ENCODE measurements at regions of chr1 and their contacts with region 1.

Region 1: DNA sequence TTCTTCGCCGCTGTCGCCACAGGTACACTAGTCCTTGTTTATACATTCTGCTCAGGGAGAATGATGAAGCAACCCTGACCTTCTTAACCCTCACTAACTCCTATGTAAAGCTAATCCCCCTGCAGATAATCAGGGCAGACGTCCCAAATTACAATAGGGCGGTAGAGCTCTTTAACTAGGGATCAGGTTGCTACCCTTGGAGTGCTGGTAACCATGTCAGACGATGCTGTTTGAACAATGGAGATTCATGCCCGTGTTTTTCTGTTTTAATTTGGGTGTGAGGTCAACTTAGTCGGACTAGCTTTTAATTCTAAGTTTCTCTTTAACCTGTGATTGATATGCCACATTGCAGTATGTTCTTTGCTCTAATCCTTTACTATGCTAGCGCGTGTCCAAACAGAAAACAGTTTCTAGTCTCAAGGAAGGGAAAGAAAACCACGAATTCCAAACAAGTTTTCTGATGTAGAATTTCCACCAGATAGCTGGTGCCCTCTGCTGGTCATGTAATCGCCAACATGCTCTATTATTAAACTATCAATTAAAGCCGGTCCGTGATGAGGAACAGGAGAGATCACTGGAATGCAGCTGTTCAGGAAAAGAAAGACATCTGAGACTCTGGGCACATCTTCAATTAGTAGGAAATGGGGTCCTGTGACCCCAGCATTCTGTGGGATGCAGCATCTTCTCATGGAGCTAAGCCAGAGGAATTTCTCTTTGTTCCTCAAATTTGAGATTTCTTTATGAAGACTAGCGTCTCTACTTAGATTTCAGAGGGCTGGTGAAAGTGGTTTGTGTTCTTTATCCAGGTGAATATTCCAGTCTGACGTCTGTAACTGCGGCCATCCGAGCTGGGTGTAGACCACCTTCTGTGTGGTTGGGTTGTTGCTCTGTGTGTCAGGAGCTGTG is 18.3 kb upstream of the VAMP3 start:
- DNase-seq: peak; percentile 84
- H3K4me3 ChIP-seq: no peak overlapping the region
- H3K27ac ChIP-seq: no peak overlapping the region
- H3K4me1 ChIP-seq: no peaks in the 10 kb centered on the region
- H3K27me3 ChIP-seq: no peaks in the 10 kb centered on the region
- CTCF ChIP-seq: peak; percentile 70 to 88 (median 79)
- POLR2A ChIP-seq: no peak

Region 2: GRCh38 chr1:7667625-7668218 is 85.0 kb before region 1 on chr1:
- intact Hi-C with region 1: loop called (anchors 5 kb)
- DNase-seq: peak; percentile 95
- H3K4me3 ChIP-seq: no peak overlapping the region
- H3K27ac ChIP-seq: no peak overlapping the region
- H3K4me1 ChIP-seq: peaks cover 4% of the 10 kb centered on the region
- H3K27me3 ChIP-seq: no peaks in the 10 kb centered on the region
- CTCF ChIP-seq: peak; percentile 99
- POLR2A ChIP-seq: no peak

Region 3: GRCh38 chr1:8329439-8329838 is 576.7 kb after region 1 on chr1:
- intact Hi-C with region 1: no loop called
- DNase-seq: no peak
- H3K4me3 ChIP-seq: no peak overlapping the region
- H3K27ac ChIP-seq: no peak overlapping the region
- H3K4me1 ChIP-seq: no peaks in the 10 kb centered on the region
- H3K27me3 ChIP-seq: no peaks in the 10 kb centered on the region
- CTCF ChIP-seq: no peak
- POLR2A ChIP-seq: no peak